ENCODE measurements at regions of chr17 and their contacts with region 1.

Region 1: DNA sequence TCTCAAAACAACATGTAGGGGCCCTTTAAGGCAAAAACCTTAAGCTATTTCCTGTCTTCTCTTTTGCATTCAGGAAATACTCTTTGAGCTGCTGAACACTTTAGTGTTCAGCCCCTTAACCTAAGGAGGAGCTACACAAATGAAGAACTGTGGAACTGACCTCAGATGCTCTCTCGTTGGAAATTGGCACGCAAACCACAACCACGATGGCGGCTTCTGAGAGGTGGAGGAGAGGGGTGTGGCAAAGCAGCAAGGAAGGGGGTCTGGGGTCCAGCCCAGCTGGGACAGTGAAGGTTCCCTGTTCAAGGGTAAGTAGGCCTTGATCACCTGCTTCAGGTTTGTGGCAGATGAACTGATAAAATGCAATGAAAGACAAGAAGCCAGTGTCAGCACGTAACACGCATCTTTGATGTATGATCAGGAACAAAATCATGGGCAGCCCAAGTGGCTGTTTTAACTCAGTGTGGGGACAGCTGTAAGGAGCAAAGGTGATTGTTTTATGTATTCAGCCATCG is 291.6 kb upstream of the TNRC6C start:
- DNase-seq: peak; percentile 87
- H3K4me3 ChIP-seq: peak overlapping the region; percentile 70
- H3K27ac ChIP-seq: peak overlapping the region; percentile 84
- H3K4me1 ChIP-seq: peaks cover 24% of the 10 kb centered on the region
- CTCF ChIP-seq: no peak

Region 2: GRCh38 chr17:77724876-77725615 is 58.1 kb after region 1 on chr17:
- CTCF ChIA-PET with region 1: no interaction called
- POLR2A ChIA-PET with region 1: interaction called, 4 read pairs
- intact Hi-C with region 1: loop called (anchors 2 kb)
- DNase-seq: peak; percentile 78
- H3K4me3 ChIP-seq: no peak overlapping the region
- H3K27ac ChIP-seq: no peak overlapping the region
- H3K4me1 ChIP-seq: peaks cover 18% of the 10 kb centered on the region
- CTCF ChIP-seq: no peak

Region 3: GRCh38 chr17:77802811-77803220 is 135.9 kb after region 1 on chr17:
- CTCF ChIA-PET with region 1: no interaction called
- POLR2A ChIA-PET with region 1: no interaction called
- intact Hi-C with region 1: no loop called
- DNase-seq: no peak
- H3K4me3 ChIP-seq: no peak overlapping the region
- H3K27ac ChIP-seq: no peak overlapping the region
- H3K4me1 ChIP-seq: no peaks in the 10 kb centered on the region
- CTCF ChIP-seq: no peak